Aorta (tissue), 5 donors: ENCODE measurements at regions of chr2 and their contacts with region 1.

Region 1: DNA sequence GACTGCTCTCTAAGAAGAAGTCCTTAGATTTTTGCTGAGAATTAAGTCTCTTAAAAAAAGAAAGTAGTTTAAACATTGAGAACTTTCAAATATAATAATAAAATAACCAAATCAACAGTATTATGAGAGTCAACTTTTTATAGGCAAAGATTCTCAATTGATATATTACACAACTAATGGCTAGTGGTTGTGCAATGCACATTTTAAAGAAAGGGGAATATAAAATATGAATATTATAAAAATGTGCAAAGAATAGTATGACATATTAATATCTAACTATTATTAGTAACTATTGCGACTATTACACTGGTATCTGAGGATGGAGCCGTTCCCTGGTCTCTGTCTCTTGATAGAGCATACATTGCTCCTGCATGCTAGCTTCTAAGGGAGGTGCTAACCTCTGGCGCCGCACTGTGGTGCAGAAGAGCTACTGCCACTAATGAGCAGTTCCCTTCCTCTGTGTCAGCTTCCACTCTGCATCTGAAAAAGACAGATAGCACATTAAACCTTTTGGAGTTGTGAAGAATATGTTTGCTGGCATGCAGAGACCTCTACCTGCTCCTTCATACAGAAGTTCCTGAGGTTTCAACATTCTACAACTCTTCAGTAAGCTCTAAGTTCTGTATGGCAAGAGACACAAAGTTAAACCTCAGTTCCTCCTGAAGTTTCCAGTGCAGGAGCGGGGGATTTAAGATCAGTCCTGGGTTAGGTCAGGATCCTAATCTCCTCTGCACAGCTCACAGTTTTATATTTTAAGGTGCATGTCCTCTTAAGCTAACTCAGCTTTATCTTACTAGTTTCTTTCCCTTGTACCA is 3.5 kb upstream of the SLC9A2 start:
- DNase-seq: peak; percentile 69 to 78
- ATAC-seq: no peak
- H3K4me3 ChIP-seq: no peak overlapping the region
- H3K27ac ChIP-seq: no peak overlapping the region
- H3K4me1 ChIP-seq: no peaks in the 10 kb centered on the region
- H3K27me3 ChIP-seq: no peaks in the 10 kb centered on the region

Region 2: DNA sequence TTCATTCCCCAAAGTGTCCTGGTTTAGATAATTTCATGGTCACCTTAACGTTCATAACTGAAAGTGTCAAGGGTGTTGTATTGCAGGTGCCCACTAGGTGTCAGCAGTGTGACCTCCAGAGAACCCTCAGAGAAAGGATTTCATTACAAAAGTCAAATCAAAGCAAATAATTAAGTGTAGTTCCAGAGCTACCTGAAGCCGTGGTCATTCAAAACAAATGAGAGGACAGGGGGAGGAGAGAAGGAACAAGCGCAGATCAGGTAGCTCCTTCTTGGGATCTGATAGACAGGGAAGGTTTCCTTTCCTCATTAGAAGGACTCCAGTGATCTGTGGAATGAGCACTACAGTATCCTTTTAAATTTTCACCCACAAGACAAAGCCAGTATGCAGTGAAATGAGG is 142.8 kb before region 1 on chr2 and contains the start of gene SLC9A4:
- intact Hi-C with region 1: loop called (anchors 2 to 5 kb)
- DNase-seq: no peak
- ATAC-seq: no peak
- H3K4me3 ChIP-seq: no peak within 1 kb of the TSS
- H3K27ac ChIP-seq: no peak within 1 kb of the TSS
- H3K4me1 ChIP-seq: no peaks in the 10 kb centered on the region
- H3K27me3 ChIP-seq: no peaks in the 10 kb centered on the region
- total RNA-seq, gene SLC9A4: 0.15 TPM in 1 of 2 donors, not detected in the other

Region 3: GRCh38 chr2:102520028-102520427 is 95.8 kb before region 1 on chr2:
- intact Hi-C with region 1: loop called (anchors 5 kb)
- DNase-seq: no peak
- ATAC-seq: no peak
- H3K4me3 ChIP-seq: no peak overlapping the region
- H3K27ac ChIP-seq: no peak overlapping the region
- H3K4me1 ChIP-seq: no peaks in the 10 kb centered on the region
- H3K27me3 ChIP-seq: no peaks in the 10 kb centered on the region

Region 4: DNA sequence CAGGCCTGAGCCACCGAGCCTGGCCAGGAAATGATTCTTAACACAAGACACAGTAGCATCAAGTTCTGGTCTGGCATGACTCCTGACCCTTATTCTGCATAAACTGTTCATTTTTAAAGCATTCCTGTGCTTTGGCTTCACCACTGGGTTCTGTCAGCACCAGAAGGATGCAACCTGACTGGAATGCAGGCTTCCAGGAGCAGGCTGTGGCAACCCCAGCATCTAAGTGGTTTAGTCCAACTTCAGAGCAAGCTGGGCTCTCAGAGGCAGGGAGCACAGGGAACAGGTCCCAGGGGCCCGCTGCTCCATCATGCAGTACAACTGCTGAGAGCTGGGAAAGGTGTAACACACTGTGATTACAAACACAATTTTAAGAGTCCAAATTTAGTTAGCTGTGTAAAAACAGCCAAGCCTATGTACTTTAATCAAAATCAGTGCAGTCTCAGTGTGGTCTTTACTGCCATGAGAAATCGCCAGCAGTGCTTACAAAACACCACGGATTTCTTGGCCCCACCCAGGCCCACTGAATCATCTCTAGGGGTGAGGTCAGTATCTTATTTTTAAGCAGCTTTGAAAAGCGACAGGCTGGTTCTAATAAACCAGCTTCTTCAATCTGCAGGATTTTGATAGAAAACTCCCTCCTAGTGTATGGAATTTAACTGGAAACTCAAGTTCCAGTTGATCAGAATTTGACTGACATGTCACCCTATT is 101.6 kb after region 1 on chr2:
- intact Hi-C with region 1: no loop called
- DNase-seq: no peak
- ATAC-seq: no peak
- H3K4me3 ChIP-seq: no peak overlapping the region
- H3K27ac ChIP-seq: no peak overlapping the region
- H3K4me1 ChIP-seq: no peaks in the 10 kb centered on the region
- H3K27me3 ChIP-seq: no peaks in the 10 kb centered on the region